ENCODE measurements at regions of chr16 and their contacts with region 1.

Region 1: DNA sequence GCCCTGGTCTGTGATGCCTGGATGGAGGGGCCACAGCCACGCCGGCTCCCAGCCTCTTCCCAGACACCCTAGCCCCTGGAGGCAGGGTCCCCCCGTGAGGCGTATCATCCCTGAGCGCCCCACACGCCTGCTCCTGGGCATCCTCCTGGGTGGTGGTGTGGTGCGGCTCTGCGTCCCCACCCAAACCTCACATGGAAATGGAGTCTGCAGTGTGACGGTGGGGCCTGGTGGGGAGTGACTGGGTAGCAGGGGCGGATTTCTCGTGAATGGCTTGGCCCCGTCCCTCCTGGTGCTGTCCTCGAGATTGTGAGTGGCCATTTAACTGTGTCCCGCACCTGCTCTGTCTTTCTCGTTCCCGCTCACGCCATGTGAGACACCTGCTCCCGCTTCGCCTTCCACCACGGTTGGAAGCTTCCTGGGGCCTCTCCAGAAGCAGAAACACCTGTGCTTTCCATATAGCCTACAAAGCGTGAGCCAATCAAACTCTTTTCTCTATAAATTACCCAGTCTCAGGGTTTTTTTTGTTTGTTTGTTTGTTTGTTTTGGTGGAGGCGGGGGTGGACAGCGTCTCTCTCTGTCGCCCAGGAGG is 5.9 kb upstream of the SSTR5 start:
- DNase-seq: no peak
- ATAC-seq: no peak
- H3K4me3 ChIP-seq: no peak overlapping the region
- H3K4me3 Mint-ChIP-seq: no peak overlapping the region
- H3K27ac ChIP-seq: no peak overlapping the region
- H3K27ac Mint-ChIP-seq: no peak overlapping the region
- H3K4me1 ChIP-seq: no peaks in the 10 kb centered on the region
- H3K4me1 Mint-ChIP-seq: peaks cover 0 to 6% of the 10 kb centered on the region in 2 donors
- H3K27me3 ChIP-seq: peaks cover 5% of the 10 kb centered on the region
- H3K27me3 Mint-ChIP-seq: peaks cover 0 to 16% of the 10 kb centered on the region in 2 donors
- CTCF ChIP-seq: no peak

Region 2: DNA sequence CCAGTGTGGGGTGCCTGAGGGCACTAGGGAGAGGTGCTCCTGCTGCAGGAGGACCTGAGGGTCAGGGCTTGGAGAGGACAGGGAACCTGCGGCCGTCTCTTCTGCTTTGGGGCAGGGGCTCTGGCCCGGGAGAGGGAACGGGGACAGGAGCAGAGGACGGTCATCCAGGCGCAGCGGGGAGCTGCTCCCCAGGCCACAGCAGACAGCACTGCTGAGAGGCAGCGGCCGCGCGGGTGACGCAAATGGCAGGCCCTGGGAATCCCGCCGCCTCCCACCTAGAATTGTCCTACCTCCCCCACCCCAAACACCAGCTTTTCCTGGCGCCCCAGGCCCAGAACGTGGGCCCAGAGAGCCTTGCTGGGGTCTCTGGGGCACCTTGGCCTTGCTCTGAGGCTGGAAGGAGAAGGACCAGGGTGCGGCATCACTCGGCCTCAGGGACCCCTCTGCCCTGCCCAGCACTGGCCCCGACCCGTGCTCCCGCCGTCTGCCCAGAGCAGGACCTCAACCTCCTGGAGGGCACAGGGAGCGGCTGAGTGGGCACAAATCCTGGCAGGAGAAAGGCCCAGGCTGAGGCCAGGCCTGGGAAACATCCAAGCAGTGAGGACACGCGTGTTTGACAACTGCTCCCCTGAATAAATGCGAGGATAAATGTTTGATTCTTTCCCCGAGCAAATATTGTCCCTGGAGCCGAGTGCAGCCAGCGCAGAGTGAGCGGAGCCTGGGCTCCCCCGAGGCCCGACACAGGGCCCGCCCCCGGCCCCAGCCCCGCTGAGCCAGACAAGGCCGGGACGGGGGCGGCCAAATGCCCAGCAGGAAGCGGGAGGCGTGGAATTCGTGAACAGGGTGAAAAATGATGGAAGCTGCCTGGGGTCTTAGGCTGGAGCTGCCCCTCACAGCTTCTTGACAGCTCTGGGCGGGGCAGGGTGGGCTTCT is 14.4 kb after region 1 on chr16:
- intact Hi-C with region 1: loop called (anchors 1 kb)
- DNase-seq: no peak
- ATAC-seq: no peak
- H3K4me3 ChIP-seq: no peak overlapping the region
- H3K4me3 Mint-ChIP-seq: no peak overlapping the region
- H3K27ac ChIP-seq: no peak overlapping the region
- H3K27ac Mint-ChIP-seq: no peak overlapping the region
- H3K4me1 ChIP-seq: no peaks in the 10 kb centered on the region
- H3K4me1 Mint-ChIP-seq: no peaks in the 10 kb centered on the region
- H3K27me3 ChIP-seq: peaks cover 2% of the 10 kb centered on the region
- H3K27me3 Mint-ChIP-seq: peaks cover 9 to 24% of the 10 kb centered on the region in 2 donors
- CTCF ChIP-seq: no peak

Region 3: GRCh38 chr16:1105888-1106620 is 39.4 kb after region 1 on chr16:
- intact Hi-C with region 1: no loop called
- DNase-seq: peak in 1 of 2 donors; percentile 62
- ATAC-seq: peak in 2 of 3 donors; percentile 39 to 59
- H3K4me3 ChIP-seq: no peak overlapping the region
- H3K4me3 Mint-ChIP-seq: no peak overlapping the region
- H3K27ac ChIP-seq: no peak overlapping the region
- H3K27ac Mint-ChIP-seq: no peak overlapping the region
- H3K4me1 ChIP-seq: peaks cover 6% of the 10 kb centered on the region
- H3K4me1 Mint-ChIP-seq: no peaks in the 10 kb centered on the region
- H3K27me3 ChIP-seq: peaks cover 8% of the 10 kb centered on the region
- H3K27me3 Mint-ChIP-seq: no peaks in the 10 kb centered on the region
- CTCF ChIP-seq: no peak

Measured in natural killer cell (primary cell).